GM12878 (cell line): ENCODE measurements at regions of chr2 and their contacts with region 1.

Region 1: GRCh38 chr2:27191053-27191829 is 20.6 kb upstream of the ATRAID start:
- DNase-seq: no peak
- ATAC-seq: peak; percentile 97
- H3K4me3 ChIP-seq: no peak overlapping the region
- H3K27ac ChIP-seq: no peak overlapping the region
- H3K4me1 ChIP-seq: no peaks in the 10 kb centered on the region
- H3K27me3 ChIP-seq: no peaks in the 10 kb centered on the region
- CTCF ChIP-seq: peak; percentile 58 to 79 (median 77)
- EP300 ChIP-seq: no peak
- POLR2A ChIP-seq: no peak
- RAD21 ChIP-seq: peak; percentile 88

Region 2: GRCh38 chr2:26959331-26959730 is 231.9 kb before region 1 on chr2:
- CTCF ChIA-PET with region 1: interaction called, 12 read pairs
- POLR2A ChIA-PET with region 1: no interaction called
- RAD21 ChIA-PET with region 1: interaction called, 9 read pairs
- SMC1A ChIA-PET with region 1: interaction called, 11 read pairs
- in situ Hi-C with region 1: no loop called
- intact Hi-C with region 1: loop called (anchors 5 kb)
- DNase-seq: no peak
- ATAC-seq: no peak
- H3K4me3 ChIP-seq: no peak overlapping the region
- H3K27ac ChIP-seq: no peak overlapping the region
- H3K4me1 ChIP-seq: no peaks in the 10 kb centered on the region
- H3K27me3 ChIP-seq: no peaks in the 10 kb centered on the region; a peak in 2 of 4 replicates
- CTCF ChIP-seq: no peak
- EP300 ChIP-seq: no peak
- POLR2A ChIP-seq: no peak
- RAD21 ChIP-seq: no peak

Region 3: GRCh38 chr2:26970244-26970920 is 220.9 kb before region 1 on chr2 and contains the start of gene MAPRE3:
- CTCF ChIA-PET with region 1: interaction called, 6 read pairs
- POLR2A ChIA-PET with region 1: no interaction called
- RAD21 ChIA-PET with region 1: interaction called, 3 read pairs
- SMC1A ChIA-PET with region 1: no interaction called
- in situ Hi-C with region 1: loop called (anchors 5 kb)
- intact Hi-C with region 1: no loop called
- DNase-seq: no peak
- ATAC-seq: peak; percentile 97
- H3K4me3 ChIP-seq: peak within 1 kb of the TSS; percentile 67
- H3K27ac ChIP-seq: no peak within 1 kb of the TSS
- H3K4me1 ChIP-seq: no peaks in the 10 kb centered on the region
- H3K27me3 ChIP-seq: peaks cover 1 to 2% of the 10 kb centered on the region in 2 experiments; a peak in 3 of 4 replicates
- CTCF ChIP-seq: no peak
- EP300 ChIP-seq: no peak
- POLR2A ChIP-seq: no peak
- RAD21 ChIP-seq: no peak
- polyA plus RNA-seq, gene MAPRE3: 0.03 TPM in 1 of 2 experiments, not detected in the other

Region 4: DNA sequence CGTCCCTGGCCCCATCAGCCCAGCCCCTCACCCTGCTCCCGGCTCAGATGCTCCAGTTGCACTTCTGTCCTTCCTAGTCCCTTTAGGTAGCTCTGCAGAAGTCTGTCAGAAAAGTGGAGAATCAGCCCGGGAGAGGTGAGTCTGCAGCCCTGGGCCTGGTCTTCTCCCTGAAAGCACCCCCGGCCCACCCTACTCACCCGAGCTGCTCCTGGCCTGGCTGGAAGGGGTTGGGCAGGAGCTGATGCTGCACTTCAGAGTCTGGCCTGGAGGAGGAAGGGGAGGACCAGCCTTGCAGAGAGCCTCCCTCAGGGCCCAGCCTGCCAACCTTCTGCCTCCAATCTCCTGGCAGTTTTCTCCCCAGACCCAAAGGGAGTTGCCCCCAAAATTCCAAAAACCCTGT is 88.9 kb before region 1 on chr2:
- CTCF ChIA-PET with region 1: interaction called, 26 read pairs
- POLR2A ChIA-PET with region 1: no interaction called
- RAD21 ChIA-PET with region 1: interaction called, 13 read pairs
- SMC1A ChIA-PET with region 1: interaction called, 19 read pairs
- in situ Hi-C with region 1: no loop called
- intact Hi-C with region 1: loop called (anchors 1 kb)
- DNase-seq: no peak
- ATAC-seq: no peak
- H3K4me3 ChIP-seq: no peak overlapping the region
- H3K27ac ChIP-seq: no peak overlapping the region
- H3K4me1 ChIP-seq: no peaks in the 10 kb centered on the region
- H3K27me3 ChIP-seq: no peaks in the 10 kb centered on the region
- CTCF ChIP-seq: no peak
- EP300 ChIP-seq: no peak
- POLR2A ChIP-seq: no peak
- RAD21 ChIP-seq: no peak

Region 5: DNA sequence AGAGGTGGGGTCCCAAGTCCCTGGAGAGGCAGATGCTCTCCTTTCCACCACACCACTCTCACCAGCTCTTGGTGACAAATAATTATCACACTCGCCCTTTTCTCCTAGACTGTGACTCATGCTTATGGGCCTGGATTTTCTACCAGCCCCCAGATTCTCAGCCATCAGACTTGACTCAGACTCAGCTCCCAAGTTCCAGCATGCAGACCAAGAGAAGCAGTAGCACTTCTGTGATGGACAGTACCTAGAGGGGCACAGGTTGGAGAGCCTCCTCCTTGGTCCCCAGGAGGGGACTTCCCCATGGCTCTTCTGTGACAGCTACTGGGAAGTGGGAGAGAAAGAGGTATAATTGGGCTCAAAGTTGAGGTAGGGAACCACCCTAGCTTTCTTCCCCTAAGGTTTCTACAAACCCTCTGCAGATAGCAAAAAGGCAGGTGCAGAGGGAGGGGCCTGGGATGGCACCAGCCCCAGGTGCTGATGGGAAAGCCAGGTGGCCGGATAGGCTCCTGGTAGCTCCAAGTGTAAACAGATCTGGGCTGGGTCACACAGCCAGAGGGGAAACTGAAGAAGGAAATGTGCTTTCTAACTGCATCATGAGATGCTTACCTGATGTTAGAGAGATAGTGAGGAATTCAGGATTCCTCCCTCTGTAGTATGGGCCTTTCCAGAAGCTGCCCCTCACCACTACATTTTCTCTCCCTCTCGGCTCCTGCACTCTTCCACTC is 38.3 kb before region 1 on chr2:
- CTCF ChIA-PET with region 1: no interaction called
- POLR2A ChIA-PET with region 1: no interaction called
- RAD21 ChIA-PET with region 1: no interaction called
- SMC1A ChIA-PET with region 1: interaction called, 10 read pairs
- in situ Hi-C with region 1: no loop called
- intact Hi-C with region 1: no loop called
- DNase-seq: no peak
- ATAC-seq: no peak
- H3K4me3 ChIP-seq: no peak overlapping the region
- H3K27ac ChIP-seq: no peak overlapping the region
- H3K4me1 ChIP-seq: no peaks in the 10 kb centered on the region
- H3K27me3 ChIP-seq: no peaks in the 10 kb centered on the region; a peak in 1 of 4 replicates
- CTCF ChIP-seq: no peak
- EP300 ChIP-seq: no peak
- POLR2A ChIP-seq: no peak
- RAD21 ChIP-seq: no peak